Endothelial cell of umbilical vein (primary cell): ENCODE measurements at regions of chr2 and their contacts with region 1.

Region 1: GRCh38 chr2:29309090-29310029 is 194.1 kb downstream of the CLIP4 start:
- DNase-seq: peak; percentile 27
- H3K4me3 ChIP-seq: no peak overlapping the region
- H3K27ac ChIP-seq: no peak overlapping the region
- H3K4me1 ChIP-seq: no peaks in the 10 kb centered on the region
- H3K27me3 ChIP-seq: no peaks in the 10 kb centered on the region
- CTCF ChIP-seq: peak; percentile 56 to 73
- POLR2A ChIP-seq: no peak

Region 2: DNA sequence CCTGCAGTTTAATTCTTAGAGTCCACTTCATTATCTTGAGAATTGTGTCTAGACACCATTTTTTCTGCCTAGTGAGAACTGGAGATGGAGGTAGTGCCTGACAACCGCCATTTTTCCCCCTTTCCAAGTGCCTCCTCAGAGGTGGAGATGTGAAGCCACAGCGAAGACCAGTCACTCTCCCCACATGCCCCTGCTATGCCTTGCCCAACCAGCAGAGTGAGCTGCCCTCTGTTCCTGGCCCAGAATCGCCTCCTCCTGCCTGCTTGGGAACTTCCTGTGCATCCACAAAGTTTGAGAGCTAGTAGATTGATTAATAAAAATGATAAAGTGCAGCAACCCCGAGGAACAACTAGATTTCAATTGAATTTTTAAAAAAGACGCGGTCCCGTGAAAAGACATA is 70.9 kb before region 1 on chr2:
- CTCF ChIA-PET with region 1: interaction called, 17 read pairs
- POLR2A ChIA-PET with region 1: no interaction called
- dilution Hi-C with region 1: no loop called
- intact Hi-C with region 1: loop called (anchors 1 kb)
- DNase-seq: peak; percentile 23
- H3K4me3 ChIP-seq: no peak overlapping the region
- H3K27ac ChIP-seq: no peak overlapping the region
- H3K4me1 ChIP-seq: no peaks in the 10 kb centered on the region
- H3K27me3 ChIP-seq: peaks cover 0 to 2% of the 10 kb centered on the region in 2 experiments
- CTCF ChIP-seq: peak; percentile 68 to 77
- POLR2A ChIP-seq: no peak

Region 3: GRCh38 chr2:29284671-29285070 is 24.7 kb before region 1 on chr2:
- CTCF ChIA-PET with region 1: interaction called, 14 read pairs
- POLR2A ChIA-PET with region 1: no interaction called
- dilution Hi-C with region 1: no loop called
- intact Hi-C with region 1: no loop called
- DNase-seq: no peak
- H3K4me3 ChIP-seq: no peak overlapping the region
- H3K27ac ChIP-seq: no peak overlapping the region
- H3K4me1 ChIP-seq: no peaks in the 10 kb centered on the region
- H3K27me3 ChIP-seq: no peaks in the 10 kb centered on the region
- CTCF ChIP-seq: no peak
- POLR2A ChIP-seq: no peak

Region 4: GRCh38 chr2:29295857-29296256 is 13.5 kb before region 1 on chr2:
- CTCF ChIA-PET with region 1: interaction called, 16 read pairs
- POLR2A ChIA-PET with region 1: no interaction called
- dilution Hi-C with region 1: no loop called
- intact Hi-C with region 1: no loop called
- DNase-seq: no peak
- H3K4me3 ChIP-seq: no peak overlapping the region
- H3K27ac ChIP-seq: no peak overlapping the region
- H3K4me1 ChIP-seq: no peaks in the 10 kb centered on the region
- H3K27me3 ChIP-seq: no peaks in the 10 kb centered on the region
- CTCF ChIP-seq: no peak
- POLR2A ChIP-seq: no peak

Region 5: GRCh38 chr2:29398384-29399237 is 89.3 kb after region 1 on chr2:
- CTCF ChIA-PET with region 1: no interaction called
- POLR2A ChIA-PET with region 1: no interaction called
- dilution Hi-C with region 1: no loop called
- intact Hi-C with region 1: no loop called
- DNase-seq: no peak
- H3K4me3 ChIP-seq: no peak overlapping the region
- H3K27ac ChIP-seq: no peak overlapping the region
- H3K4me1 ChIP-seq: no peaks in the 10 kb centered on the region
- H3K27me3 ChIP-seq: no peaks in the 10 kb centered on the region
- CTCF ChIP-seq: no peak
- POLR2A ChIP-seq: no peak

Region 6: GRCh38 chr2:29878898-29879297 is 569.5 kb after region 1 on chr2:
- CTCF ChIA-PET with region 1: no interaction called
- POLR2A ChIA-PET with region 1: no interaction called
- dilution Hi-C with region 1: no loop called
- intact Hi-C with region 1: no loop called
- DNase-seq: no peak
- H3K4me3 ChIP-seq: no peak overlapping the region
- H3K27ac ChIP-seq: no peak overlapping the region
- H3K4me1 ChIP-seq: no peaks in the 10 kb centered on the region
- H3K27me3 ChIP-seq: no peaks in the 10 kb centered on the region
- CTCF ChIP-seq: no peak
- POLR2A ChIP-seq: no peak